ENCODE measurements at regions of chr11 and their contacts with region 1.

Region 1: DNA sequence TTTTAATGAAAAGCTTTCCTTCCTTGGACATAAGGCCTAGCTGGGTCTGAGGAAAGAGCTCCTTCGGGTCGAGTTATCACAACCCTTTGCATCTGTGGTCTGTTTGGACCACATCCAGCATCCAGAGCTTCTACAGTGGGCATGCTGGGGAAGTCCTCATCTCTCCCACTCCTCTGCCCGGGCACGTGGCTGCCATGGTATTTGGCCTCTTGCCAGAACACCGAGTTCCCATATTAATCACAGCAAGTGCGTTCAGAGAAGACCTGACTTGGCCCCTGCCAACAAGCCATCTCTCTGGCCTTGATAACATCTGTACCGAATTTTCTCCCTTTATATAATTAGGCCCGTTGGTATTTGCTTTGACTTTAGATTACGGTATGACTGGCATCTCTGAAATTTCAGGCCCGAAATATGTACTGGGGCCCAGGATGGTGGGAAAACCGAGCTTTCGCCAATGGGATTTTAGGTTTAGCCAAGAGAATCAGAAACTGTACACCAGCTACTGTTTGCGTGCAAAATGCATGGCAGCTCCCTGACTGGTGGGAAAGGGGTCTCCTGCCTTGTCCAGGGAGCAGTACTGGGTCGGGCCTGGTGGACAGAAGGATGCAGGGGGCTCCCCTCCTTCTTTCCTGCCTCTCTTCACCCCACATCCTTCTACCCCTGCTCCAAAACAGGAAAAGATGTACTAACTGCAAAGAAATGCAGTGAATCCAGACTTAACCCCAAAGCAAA is 90.1 kb downstream of the MICAL2 start:
- DNase-seq: peak; percentile 93
- H3K4me3 ChIP-seq: no peak overlapping the region
- H3K27ac ChIP-seq: peak overlapping the region; percentile 94
- H3K4me1 ChIP-seq: peaks cover 45% of the 10 kb centered on the region
- H3K27me3 ChIP-seq: no peaks in the 10 kb centered on the region
- CTCF ChIP-seq: no peak
- POLR2A ChIP-seq: no peak

Region 2: DNA sequence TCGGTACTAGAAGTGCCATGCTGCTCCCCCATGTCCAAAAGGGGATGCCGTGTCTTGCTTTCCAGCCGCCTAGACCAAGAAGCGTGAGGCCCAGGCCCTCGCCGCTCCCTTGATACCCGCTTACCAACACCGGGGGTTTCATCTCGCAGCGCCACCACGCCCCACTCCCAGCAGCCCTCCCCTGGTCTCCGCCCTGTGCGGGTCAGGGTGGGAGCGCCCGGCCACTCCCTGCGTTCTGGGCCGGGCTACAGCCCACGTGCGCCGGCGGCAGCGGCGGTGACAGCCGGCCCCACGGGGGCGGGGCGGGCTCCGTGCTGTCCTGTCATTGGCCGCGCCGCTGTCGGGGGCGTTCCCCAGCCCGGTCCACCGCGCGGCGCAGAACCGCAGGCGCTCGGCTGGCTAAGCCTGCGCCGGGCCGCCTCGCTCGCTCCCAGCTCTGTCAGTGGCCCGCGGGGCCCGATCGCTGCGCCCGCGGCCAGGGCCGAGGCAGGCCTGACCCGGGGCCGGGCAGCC is 90.2 kb before region 1 on chr11 and contains the start of gene MICAL2:
- CTCF ChIA-PET with region 1: interaction called, 4 read pairs
- POLR2A ChIA-PET with region 1: interaction called, 3 read pairs
- dilution Hi-C with region 1: no loop called
- intact Hi-C with region 1: loop called (anchors 1 kb)
- DNase-seq: peak; percentile 87
- H3K4me3 ChIP-seq: peak within 1 kb of the TSS; percentile 50 to 86 (median 73)
- H3K27ac ChIP-seq: peak within 1 kb of the TSS; percentile 56
- H3K4me1 ChIP-seq: peaks cover 40% of the 10 kb centered on the region
- H3K27me3 ChIP-seq: no peaks in the 10 kb centered on the region
- CTCF ChIP-seq: no peak
- POLR2A ChIP-seq: peak; percentile 85
- total RNA-seq, gene MICAL2: 200 and 222 TPM in 2 replicates

Region 3: DNA sequence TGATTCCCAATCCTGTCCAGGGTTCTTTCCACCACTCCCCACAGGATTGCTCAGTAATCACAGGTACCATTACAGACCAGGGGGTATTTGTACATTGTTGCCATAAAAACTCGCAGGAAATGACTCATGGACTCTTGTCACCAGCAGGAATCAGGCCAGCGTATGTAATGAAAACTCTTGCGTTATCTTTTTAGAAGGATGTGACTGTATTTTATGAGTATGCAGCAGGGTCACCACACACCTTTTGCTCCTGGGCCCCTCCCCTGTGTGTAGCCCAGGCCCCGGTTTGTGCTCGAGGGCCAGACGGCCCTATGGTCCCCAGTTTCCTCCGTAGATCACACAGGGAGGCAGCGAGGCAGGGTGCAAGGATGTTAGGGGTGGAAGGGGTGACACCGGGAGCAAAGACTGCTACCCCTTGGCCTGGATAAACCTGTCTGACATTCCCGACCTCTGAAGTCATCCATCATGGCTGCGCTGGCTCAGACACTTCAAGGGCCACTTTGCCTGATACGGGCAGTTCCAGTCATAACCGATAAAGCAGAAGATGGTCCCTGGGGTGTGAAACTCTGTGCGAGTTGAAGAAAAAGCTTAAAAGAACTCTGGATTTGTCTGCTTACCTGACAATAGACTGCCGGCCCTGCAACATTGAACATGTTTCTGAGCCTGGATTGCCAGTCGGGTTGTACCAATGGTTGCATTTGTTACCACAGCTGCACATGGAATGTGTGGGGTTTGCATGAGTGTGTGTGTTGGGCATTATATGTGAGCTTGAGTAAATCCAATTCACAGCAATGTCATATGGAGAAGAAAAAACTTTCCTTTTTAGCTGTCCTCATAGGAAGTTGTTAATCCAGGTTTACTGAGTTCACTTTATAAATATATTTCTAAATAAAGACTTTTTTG is 33.1 kb before region 1 on chr11:
- CTCF ChIA-PET with region 1: interaction called, 16 read pairs
- POLR2A ChIA-PET with region 1: interaction called, 3 read pairs
- dilution Hi-C with region 1: no loop called
- intact Hi-C with region 1: loop called (anchors 1 kb)
- DNase-seq: peak; percentile 92
- H3K4me3 ChIP-seq: no peak overlapping the region
- H3K27ac ChIP-seq: peak overlapping the region; percentile 95
- H3K4me1 ChIP-seq: peaks cover 59% of the 10 kb centered on the region
- H3K27me3 ChIP-seq: no peaks in the 10 kb centered on the region
- CTCF ChIP-seq: no peak
- POLR2A ChIP-seq: peak; percentile 78

Region 4: GRCh38 chr11:12189543-12190235 is 10.8 kb before region 1 on chr11:
- CTCF ChIA-PET with region 1: interaction called, 36 read pairs
- POLR2A ChIA-PET with region 1: interaction called, 3 read pairs
- dilution Hi-C with region 1: no loop called
- intact Hi-C with region 1: no loop called
- DNase-seq: peak; percentile 19
- H3K4me3 ChIP-seq: no peak overlapping the region
- H3K27ac ChIP-seq: no peak overlapping the region
- H3K4me1 ChIP-seq: peaks cover 25% of the 10 kb centered on the region
- H3K27me3 ChIP-seq: no peaks in the 10 kb centered on the region
- CTCF ChIP-seq: no peak
- POLR2A ChIP-seq: no peak

Region 5: DNA sequence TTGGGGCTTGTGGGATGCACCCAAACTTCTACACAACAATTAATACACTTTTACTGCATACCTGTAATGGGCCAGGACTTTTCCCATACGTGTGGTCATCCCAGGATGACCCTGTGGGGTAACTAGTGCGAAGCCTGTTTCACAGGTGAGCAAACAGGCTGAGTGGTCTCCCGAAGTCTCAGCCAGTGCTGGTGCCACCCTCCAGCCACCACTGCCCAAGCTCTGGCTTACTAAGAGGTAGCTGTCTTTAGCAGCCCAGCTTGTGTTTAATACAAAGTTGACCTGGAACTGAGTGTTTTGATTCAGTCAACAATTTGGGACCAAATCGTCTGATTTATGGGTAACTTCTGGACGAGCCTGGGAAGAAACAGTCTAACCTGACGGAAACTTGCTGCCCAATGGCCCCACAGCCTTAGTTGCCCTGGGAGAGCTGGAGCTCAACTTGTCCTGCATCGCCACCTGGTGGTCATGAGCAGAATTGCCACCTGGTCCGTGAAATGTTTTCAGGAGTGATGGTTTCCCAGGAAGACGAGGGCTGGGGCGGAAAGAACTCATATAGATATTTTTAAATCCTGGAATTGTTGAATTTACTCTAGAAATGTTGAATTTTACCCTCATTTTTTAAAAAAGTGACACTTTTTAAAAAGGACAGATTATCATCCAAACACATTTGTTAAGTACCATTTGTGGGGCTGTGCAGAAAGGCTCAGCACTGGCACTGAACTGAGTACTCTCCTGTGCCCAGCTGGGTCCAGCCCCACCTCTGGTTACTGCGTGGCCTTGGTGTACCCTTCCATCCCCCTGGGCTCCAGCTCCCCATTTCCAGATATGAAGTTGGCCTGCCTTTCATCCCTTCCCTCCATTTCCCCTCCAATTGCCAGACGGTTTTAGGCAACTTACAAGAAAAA is 81.4 kb after region 1 on chr11:
- CTCF ChIA-PET with region 1: interaction called, 18 read pairs
- POLR2A ChIA-PET with region 1: interaction called, 4 read pairs
- dilution Hi-C with region 1: no loop called
- intact Hi-C with region 1: loop called (anchors 2 kb)
- DNase-seq: peak; percentile 81
- H3K4me3 ChIP-seq: no peak overlapping the region
- H3K27ac ChIP-seq: no peak overlapping the region
- H3K4me1 ChIP-seq: peaks cover 27% of the 10 kb centered on the region
- H3K27me3 ChIP-seq: no peaks in the 10 kb centered on the region
- CTCF ChIP-seq: peak; percentile 82 to 91
- POLR2A ChIP-seq: no peak

Region 6: GRCh38 chr11:12979928-12980689 is 779.7 kb after region 1 on chr11:
- CTCF ChIA-PET with region 1: no interaction called
- POLR2A ChIA-PET with region 1: no interaction called
- dilution Hi-C with region 1: no loop called
- intact Hi-C with region 1: no loop called
- DNase-seq: no peak
- H3K4me3 ChIP-seq: no peak overlapping the region
- H3K27ac ChIP-seq: no peak overlapping the region
- H3K4me1 ChIP-seq: no peaks in the 10 kb centered on the region
- H3K27me3 ChIP-seq: peaks cover 33 to 43% of the 10 kb centered on the region in 2 experiments
- CTCF ChIP-seq: no peak
- POLR2A ChIP-seq: no peak